Dorsolateral prefrontal cortex (tissue), 120 donors: ENCODE measurements at regions of chr6 and their contacts with region 1.

Region 1: DNA sequence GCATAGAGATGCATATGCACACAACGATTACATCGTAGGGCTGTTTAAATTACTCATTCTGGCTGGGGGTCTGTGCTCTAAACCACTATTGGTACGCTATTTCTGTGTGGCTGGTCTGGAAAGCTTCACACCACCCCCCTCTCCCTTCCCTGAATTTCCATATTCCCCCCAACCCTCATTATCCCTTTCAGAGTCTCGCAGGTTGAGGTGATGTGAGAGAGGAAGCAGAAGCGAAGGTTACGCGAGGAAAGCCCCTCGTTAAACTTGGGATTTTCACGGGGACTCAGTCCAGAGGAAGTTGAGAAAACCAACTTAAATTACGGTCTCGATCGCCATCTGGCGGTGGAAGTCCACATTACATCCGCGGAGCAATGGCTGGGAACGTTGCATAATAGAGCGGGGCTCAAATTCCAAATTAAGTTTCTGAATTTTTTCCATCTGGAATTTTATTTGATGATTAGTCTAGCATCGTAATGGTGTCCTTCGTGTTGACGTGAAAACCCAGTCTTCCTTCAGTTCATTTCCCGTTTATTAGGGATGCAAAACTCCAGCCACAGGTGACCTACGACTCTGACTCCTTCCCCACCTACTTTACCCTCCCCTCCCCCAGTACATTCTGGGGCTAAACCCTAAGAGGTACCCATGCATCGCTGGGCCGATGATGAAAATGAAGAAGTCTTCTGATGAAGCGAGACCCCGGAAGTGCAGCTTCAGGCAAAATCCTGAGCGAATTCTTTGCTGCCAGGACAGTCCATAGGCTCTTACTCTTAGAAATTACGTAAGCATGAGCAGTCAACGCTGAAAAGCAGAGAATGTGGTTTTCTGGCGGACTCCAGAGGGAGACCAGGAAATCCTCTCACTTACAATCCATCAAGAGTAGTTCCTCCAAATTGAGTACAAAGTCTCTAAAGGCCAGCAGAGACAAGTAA is 19.7 kb downstream of the HLA-DOB start:
- DNase-seq: peak; percentile 60 to 87 (median 73)
- H3K4me3 ChIP-seq: peak overlapping the region in 38 of 59 donors; percentile 1 to 49 (median 23)
- H3K27ac ChIP-seq: peak overlapping the region in 3 of 59 donors; percentile 8 to 40 (median 9)
- H3K27me3 ChIP-seq: peaks cover 0 to 73% (median 13%) of the 10 kb centered on the region in 45 donors
- CTCF ChIP-seq: peak; percentile 82 to 99 (median 93)

Region 2: DNA sequence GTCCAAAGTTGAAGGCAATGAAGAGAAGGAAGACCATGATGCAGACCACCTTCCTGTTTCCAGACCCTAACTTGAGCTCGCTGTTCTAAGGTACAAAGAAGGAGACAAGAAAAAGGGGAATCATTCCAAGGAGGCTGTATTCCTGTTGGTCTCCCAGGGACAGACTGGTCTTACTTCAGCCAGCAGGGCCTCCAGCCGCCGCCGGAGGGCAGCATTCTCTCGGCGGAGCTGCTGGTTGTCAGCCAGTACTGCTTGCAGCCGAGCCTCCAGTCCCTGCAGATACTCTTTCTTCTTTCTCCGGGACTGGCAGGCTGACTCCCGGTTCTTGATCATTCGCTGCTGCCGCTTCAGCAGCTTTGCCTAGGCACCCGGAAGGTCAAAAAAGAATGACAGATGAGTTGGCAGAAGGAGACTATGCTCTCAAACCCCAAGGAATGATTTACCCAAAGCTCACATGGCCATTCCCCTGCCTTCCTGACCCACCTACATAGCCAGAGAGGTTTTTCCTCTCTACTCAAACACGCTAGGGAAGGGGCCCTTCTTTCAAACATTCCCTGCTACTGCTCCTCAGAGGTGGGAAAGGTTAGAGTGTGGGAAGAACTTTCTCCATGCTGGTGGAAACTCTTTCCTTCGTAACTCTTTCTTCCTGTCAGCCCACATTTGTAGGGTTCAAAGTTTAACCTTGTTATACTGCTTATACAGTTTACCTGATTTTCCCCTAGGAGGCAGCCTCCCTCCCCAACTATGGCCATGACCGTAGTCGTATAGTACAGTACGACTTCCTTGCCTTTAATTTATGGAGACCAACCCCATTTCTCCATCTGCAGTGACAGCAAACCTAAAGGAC is 678.1 kb before region 1 on chr6:
- intact Hi-C with region 1: loop called in 1 of 2 experiments (anchors 10 kb)
- DNase-seq: peak; percentile 84 to 95 (median 92)
- H3K4me3 ChIP-seq: peak overlapping the region in 14 of 59 donors; percentile 1 to 25 (median 4)
- H3K27ac ChIP-seq: peak overlapping the region in 54 of 59 donors; percentile 6 to 88 (median 68)
- H3K27me3 ChIP-seq: no peaks in the 10 kb centered on the region
- CTCF ChIP-seq: peak; percentile 75 to 99 (median 94)

Region 3: GRCh38 chr6:32244946-32245398 is 552.1 kb before region 1 on chr6:
- intact Hi-C with region 1: loop called (anchors 10 kb)
- DNase-seq: peak; percentile 65 to 88 (median 76)
- H3K4me3 ChIP-seq: peak overlapping the region in 36 of 59 donors; percentile 5 to 46 (median 30)
- H3K27ac ChIP-seq: peak overlapping the region in 11 of 59 donors; percentile 3 to 65 (median 30)
- H3K27me3 ChIP-seq: no peaks in the 10 kb centered on the region
- CTCF ChIP-seq: peak; percentile 79 to 98 (median 94)